ENCODE measurements at regions of chr10 and their contacts with region 1.

Region 1: GRCh38 chr10:59709395-59710125 is at the start of gene SLC16A9:
- DNase-seq: peak; percentile 66
- H3K4me3 ChIP-seq: peak within 1 kb of the TSS; percentile 45 to 54 (median 48)
- H3K27ac ChIP-seq: no peak within 1 kb of the TSS
- H3K4me1 ChIP-seq: peaks cover 10% of the 10 kb centered on the region
- H3K27me3 ChIP-seq: peaks cover 31% of the 10 kb centered on the region
- CTCF ChIP-seq: peak; percentile 3 to 30
- total RNA-seq, gene SLC16A9: under 0.01 to 0.07 TPM

Region 2: GRCh38 chr10:59354434-59354833 is 355.1 kb before region 1 on chr10:
- CTCF ChIA-PET with region 1: no interaction called
- dilution Hi-C with region 1: no loop called
- in situ Hi-C with region 1: no loop called
- intact Hi-C with region 1: no loop called
- DNase-seq: no peak
- H3K4me3 ChIP-seq: no peak overlapping the region
- H3K27ac ChIP-seq: no peak overlapping the region
- H3K4me1 ChIP-seq: no peaks in the 10 kb centered on the region
- H3K27me3 ChIP-seq: no peaks in the 10 kb centered on the region
- CTCF ChIP-seq: no peak

Region 3: GRCh38 chr10:59648711-59649201 is 60.8 kb before region 1 on chr10:
- CTCF ChIA-PET with region 1: no interaction called
- dilution Hi-C with region 1: no loop called
- in situ Hi-C with region 1: no loop called
- intact Hi-C with region 1: loop called (anchors 10 kb)
- DNase-seq: no peak
- H3K4me3 ChIP-seq: no peak overlapping the region
- H3K27ac ChIP-seq: no peak overlapping the region
- H3K4me1 ChIP-seq: no peaks in the 10 kb centered on the region
- H3K27me3 ChIP-seq: no peaks in the 10 kb centered on the region
- CTCF ChIP-seq: no peak

Measured in mammary epithelial cell (primary cell).